PC-3 (cell line): ENCODE measurements at regions of chr10 and their contacts with region 1.

Region 1: GRCh38 chr10:61903221-61903927 is 1.9 kb downstream of the ARID5B start:
- DNase-seq: peak; percentile 78
- ATAC-seq: peak; percentile 30
- H3K4me3 ChIP-seq: peak overlapping the region; percentile 75
- H3K27ac ChIP-seq: peak overlapping the region; percentile 52
- H3K4me1 ChIP-seq: peaks cover 30% of the 10 kb centered on the region
- H3K27me3 ChIP-seq: no peaks in the 10 kb centered on the region
- CTCF ChIP-seq: peak; percentile 66

Region 2: DNA sequence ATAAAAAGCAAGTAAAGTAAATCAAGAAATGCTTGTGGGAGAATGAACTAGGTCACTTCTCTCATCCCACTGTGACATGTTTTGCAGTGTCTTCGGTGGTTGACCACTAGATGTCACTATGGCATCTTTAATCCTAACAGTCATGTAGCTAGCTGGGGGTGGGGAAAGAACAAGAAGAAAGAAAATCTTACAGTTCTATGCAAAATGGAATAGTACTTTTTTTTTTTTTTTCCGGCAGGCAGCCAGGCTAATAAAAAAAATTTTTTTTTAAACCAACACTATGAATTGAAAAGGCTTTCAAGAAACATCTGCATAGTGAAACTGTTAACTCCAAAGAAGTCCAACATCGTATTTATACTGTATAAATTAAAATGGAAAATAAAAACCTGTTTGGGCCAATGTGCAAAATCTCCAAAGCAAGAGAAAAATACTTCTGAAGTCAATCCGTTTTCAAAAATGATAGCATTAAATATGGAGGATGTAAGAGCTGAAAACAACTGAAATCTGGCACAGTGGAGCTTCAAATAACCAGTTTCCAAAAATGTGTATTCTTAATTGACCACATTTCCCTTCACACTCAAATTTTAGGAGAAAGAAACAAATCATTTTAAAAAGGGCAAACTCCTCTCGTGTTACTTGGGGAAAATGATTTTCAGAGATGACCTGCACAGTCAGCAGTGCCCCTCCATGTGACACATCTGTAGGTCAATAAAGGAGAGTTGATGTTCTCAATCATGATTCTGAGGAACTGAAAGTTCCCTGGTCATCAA is 1086.6 kb before region 1 on chr10:
- CTCF ChIA-PET with region 1: no interaction called
- POLR2A ChIA-PET with region 1: no interaction called
- intact Hi-C with region 1: loop called (anchors 5 kb)
- DNase-seq: peak; percentile 97
- ATAC-seq: peak; percentile 93
- H3K4me3 ChIP-seq: no peak overlapping the region
- H3K27ac ChIP-seq: no peak overlapping the region
- H3K4me1 ChIP-seq: peaks cover 6% of the 10 kb centered on the region; the same call in 1 of the 2 replicates
- H3K27me3 ChIP-seq: no peaks in the 10 kb centered on the region
- CTCF ChIP-seq: peak; percentile 100

Region 3: DNA sequence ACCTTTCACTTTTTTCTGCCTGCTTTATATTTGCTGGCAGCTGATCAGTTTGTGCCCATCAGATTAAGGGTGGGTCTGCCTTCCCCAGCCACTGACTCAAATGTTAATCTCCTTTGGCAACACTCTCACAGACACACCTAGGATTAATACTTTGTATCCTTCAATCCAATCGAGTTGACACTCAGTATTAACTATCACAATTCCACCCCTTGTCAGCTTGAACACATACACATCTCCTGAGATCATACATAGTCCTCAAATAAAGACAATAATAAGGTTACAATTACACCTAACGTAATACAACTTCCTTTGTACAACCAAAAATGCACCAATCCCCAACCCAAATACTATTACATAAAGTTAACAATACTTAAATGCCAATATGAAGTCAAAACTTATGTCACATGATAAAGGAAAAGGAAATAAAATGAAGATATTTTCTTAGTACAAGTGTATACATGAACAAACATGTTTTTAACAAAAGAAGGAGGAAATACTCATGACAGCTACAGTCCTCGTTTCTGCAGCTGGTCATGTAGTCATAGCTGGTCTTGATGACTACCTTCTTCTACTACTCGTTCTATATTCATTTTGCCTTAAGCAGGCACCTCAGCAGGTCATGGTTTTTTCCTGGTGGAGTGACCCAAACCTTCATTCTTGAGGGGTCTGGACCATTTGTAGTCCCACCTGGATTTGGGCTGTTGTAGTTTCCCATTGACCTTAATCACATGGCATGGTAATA is 337.4 kb before region 1 on chr10:
- CTCF ChIA-PET with region 1: no interaction called
- POLR2A ChIA-PET with region 1: interaction called, 33 read pairs
- intact Hi-C with region 1: no loop called
- DNase-seq: no peak
- ATAC-seq: no peak
- H3K4me3 ChIP-seq: no peak overlapping the region
- H3K27ac ChIP-seq: no peak overlapping the region
- H3K4me1 ChIP-seq: no peaks in the 10 kb centered on the region
- H3K27me3 ChIP-seq: no peaks in the 10 kb centered on the region
- CTCF ChIP-seq: no peak

Region 4: DNA sequence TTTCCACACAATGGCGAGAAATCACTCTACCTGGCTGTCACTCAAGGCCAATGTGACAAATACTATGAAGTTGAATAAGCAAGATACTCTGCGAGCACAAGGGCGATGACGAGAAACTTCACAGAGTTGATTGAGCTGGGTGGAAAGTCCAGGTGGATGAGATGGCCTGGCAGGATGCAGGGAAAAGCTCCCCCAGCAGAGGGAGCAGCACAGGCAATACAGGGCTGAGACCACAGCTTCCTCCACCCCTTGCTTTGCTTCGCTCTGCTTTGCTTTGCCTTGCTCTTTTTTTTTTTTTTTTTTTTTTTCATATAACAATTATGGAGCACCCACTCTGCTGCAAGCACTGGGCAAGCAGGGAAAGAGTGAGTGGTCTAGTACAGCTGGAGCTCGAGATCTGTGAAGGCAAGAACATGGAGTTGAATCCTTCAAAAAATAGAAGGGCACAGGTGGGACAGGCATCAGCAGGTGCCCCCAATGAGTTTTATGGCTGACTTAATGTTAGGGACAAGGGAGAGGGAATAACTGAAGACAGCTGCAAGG is 152.4 kb before region 1 on chr10:
- CTCF ChIA-PET with region 1: interaction called, 49 read pairs
- POLR2A ChIA-PET with region 1: interaction called, 4 read pairs
- intact Hi-C with region 1: loop called (anchors 1 kb)
- DNase-seq: peak; percentile 98
- ATAC-seq: peak; percentile 83
- H3K4me3 ChIP-seq: no peak overlapping the region
- H3K27ac ChIP-seq: peak overlapping the region; percentile 48
- H3K4me1 ChIP-seq: peaks cover 26% of the 10 kb centered on the region
- H3K27me3 ChIP-seq: no peaks in the 10 kb centered on the region
- CTCF ChIP-seq: peak; percentile 100

Region 5: DNA sequence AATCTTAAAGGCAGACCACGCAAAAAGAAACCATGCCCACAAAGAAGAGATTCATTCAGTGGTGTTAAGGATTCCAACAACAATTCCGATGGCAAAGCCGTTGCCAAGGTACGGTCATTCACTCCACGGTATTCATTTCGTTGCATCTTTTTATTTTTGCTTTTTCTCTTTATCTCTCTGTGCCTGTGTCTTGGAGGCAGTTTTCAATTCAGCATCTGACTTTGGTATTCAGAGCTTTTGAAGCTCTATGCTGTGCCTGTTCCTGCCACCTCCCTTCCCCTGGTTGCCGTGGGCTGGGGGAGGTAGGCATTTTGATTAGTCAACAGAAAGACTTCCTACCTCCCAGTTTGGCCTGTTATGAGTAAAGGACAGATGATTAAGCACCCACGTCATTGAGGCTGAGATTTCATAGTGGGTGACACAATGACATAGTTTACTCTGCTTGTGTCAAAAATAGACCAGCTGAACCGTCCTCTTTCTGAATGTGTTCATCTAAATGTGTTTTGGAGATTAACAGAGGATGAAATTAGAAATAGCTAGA is 147.6 kb after region 1 on chr10:
- CTCF ChIA-PET with region 1: interaction called, 9 read pairs
- POLR2A ChIA-PET with region 1: interaction called, 16 read pairs
- intact Hi-C with region 1: no loop called
- DNase-seq: peak; percentile 100
- ATAC-seq: peak; percentile 41
- H3K4me3 ChIP-seq: peak overlapping the region; percentile 63
- H3K27ac ChIP-seq: peak overlapping the region; percentile 77
- H3K4me1 ChIP-seq: peaks cover 60% of the 10 kb centered on the region
- H3K27me3 ChIP-seq: no peaks in the 10 kb centered on the region
- CTCF ChIP-seq: no peak

Region 6: DNA sequence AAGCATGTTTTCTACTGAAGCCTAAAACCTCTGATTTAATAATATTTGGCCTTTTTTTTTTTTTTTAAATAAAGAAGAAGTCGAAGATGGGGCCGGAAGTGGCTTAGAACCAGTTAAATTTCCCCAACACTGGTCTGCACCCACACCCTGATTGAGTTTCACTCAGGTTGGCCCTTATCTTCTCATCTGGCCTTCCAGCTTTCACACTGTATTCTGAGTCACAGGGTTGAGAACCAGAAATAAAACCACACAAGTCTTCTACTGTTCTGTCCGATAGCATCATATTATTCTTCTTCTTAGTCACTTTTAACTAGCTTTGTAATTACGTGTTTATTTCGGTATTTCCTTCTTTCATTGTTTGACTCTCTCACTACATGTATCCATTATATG is 480.7 kb after region 1 on chr10:
- CTCF ChIA-PET with region 1: no interaction called
- POLR2A ChIA-PET with region 1: no interaction called
- intact Hi-C with region 1: loop called (anchors 5 kb)
- DNase-seq: peak; percentile 100
- ATAC-seq: peak; percentile 74
- H3K4me3 ChIP-seq: peak overlapping the region; percentile 36
- H3K27ac ChIP-seq: peak overlapping the region; percentile 79
- H3K4me1 ChIP-seq: peaks cover 88% of the 10 kb centered on the region
- H3K27me3 ChIP-seq: no peaks in the 10 kb centered on the region
- CTCF ChIP-seq: no peak